ENCODE measurements at regions of chr22 and their contacts with region 1.

Region 1: DNA sequence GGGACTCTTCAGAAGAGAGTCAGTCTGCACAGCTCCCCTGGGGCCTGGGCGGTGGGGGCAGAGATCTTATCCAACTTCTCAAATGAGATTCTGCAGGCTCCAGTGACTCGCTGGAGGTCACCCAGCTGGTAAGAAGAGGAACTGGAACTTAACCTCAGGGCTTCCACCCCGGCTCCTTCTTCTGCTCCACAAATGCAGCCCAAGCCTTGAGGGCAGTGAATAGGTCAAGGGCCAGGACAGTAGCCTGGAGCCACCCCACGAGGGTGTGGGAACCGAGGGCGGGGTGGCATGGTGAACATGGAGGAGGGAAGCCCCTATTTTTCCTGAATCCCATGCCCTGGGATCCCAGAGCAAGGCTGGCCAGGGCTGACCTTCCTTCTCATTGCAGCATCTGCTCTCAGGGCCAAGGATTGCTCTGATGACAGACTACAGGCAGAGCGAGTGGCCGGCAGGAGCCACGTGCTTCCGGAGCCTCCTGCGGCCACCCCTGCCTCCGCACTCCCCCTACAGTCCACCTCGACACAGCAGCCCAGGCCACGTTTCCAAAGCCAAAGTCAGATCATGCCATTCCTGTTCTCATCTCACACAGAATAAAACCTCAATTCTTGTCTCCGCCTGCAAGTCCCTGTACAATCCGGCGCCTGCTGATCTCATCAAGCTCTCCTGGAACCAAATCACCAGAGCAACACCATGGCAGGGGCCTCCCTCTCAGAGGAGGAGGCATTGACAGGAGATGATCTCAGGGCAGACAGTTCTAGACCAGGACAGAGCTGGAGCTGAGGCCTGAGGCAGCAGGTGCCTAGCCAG is 21.1 kb upstream of the UPK3A start:
- DNase-seq: peak; percentile 71
- ATAC-seq: peak; percentile 92
- H3K4me3 ChIP-seq: peak overlapping the region; percentile 26; the same call in 1 of the 2 replicates
- H3K27ac ChIP-seq: peak overlapping the region; percentile 64
- H3K4me1 ChIP-seq: peaks cover 35% of the 10 kb centered on the region
- H3K27me3 ChIP-seq: no peaks in the 10 kb centered on the region; a peak in 1 of 4 replicates
- CTCF ChIP-seq: peak; percentile 69 to 92 (median 79)
- EP300 ChIP-seq: peak; percentile 52 to 61; a peak in 2 of 4 replicates
- POLR2A ChIP-seq: no peak
- RAD21 ChIP-seq: peak; percentile 74

Region 2: GRCh38 chr22:45125188-45125587 is 138.5 kb before region 1 on chr22:
- CTCF ChIA-PET with region 1: no interaction called
- POLR2A ChIA-PET with region 1: no interaction called
- RAD21 ChIA-PET with region 1: no interaction called
- SMC1A ChIA-PET with region 1: no interaction called
- in situ Hi-C with region 1: no loop called
- intact Hi-C with region 1: no loop called
- DNase-seq: no peak
- ATAC-seq: no peak
- H3K4me3 ChIP-seq: no peak overlapping the region
- H3K27ac ChIP-seq: no peak overlapping the region
- H3K4me1 ChIP-seq: peaks cover 4% of the 10 kb centered on the region
- H3K27me3 ChIP-seq: no peaks in the 10 kb centered on the region
- CTCF ChIP-seq: no peak
- EP300 ChIP-seq: no peak
- POLR2A ChIP-seq: no peak
- RAD21 ChIP-seq: no peak

Region 3: DNA sequence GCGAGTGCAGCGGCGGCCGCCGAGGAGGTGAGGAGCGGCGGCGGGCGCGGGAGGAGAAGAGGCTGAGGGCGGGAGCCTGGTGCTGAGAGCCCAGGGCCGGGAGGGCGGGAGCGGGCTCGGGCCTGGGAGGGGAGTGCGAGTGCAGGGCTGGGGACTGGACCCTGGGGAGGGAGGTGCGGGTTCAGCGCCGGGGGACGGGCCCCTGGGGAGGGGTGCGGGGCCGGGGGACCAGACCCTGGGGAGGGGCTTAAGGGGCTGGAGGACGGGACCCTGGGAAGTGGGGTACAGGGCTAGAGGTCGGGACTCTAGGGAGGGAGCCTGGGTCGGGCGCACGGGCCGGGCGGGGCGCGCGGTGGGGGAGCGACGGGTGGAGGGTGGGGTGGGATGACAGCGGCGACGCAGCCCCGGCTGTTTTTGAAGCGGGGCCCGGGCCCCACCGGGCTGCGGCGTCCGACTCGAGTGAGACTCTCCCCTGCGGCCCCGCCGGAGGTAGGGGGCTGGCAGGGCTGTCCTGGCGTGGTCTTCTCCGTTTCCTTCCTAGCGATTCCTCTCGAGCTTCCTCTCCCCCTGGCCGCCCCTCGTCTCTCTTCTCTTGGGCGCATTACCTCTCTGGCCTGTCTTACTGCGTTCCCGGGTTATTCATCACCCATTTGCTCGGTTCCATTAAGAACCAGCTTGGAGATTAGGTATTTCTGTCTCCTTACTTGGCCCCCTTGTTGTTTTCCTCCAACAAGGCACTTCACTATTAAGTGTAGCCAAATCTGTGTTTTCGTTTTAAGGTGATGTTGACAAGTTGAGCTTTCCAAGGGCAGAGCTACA is 99.2 kb before region 1 on chr22:
- CTCF ChIA-PET with region 1: interaction called, 6 read pairs
- POLR2A ChIA-PET with region 1: no interaction called
- RAD21 ChIA-PET with region 1: interaction called, 6 read pairs
- SMC1A ChIA-PET with region 1: interaction called, 24 read pairs
- in situ Hi-C with region 1: no loop called
- intact Hi-C with region 1: loop called (anchors 5 kb)
- DNase-seq: no peak
- ATAC-seq: peak; percentile 52
- H3K4me3 ChIP-seq: peak overlapping the region; percentile 97
- H3K27ac ChIP-seq: peak overlapping the region; percentile 78
- H3K4me1 ChIP-seq: peaks cover 9% of the 10 kb centered on the region
- H3K27me3 ChIP-seq: no peaks in the 10 kb centered on the region
- CTCF ChIP-seq: no peak
- EP300 ChIP-seq: no peak
- POLR2A ChIP-seq: no peak
- RAD21 ChIP-seq: no peak

Region 4: GRCh38 chr22:45235101-45235777 is 28.4 kb before region 1 on chr22:
- CTCF ChIA-PET with region 1: interaction called, 13 read pairs
- POLR2A ChIA-PET with region 1: interaction called, 6 read pairs
- RAD21 ChIA-PET with region 1: interaction called, 28 read pairs
- SMC1A ChIA-PET with region 1: interaction called, 32 read pairs
- in situ Hi-C with region 1: no loop called
- intact Hi-C with region 1: no loop called
- DNase-seq: peak; percentile 81
- ATAC-seq: peak; percentile 92
- H3K4me3 ChIP-seq: peak overlapping the region; percentile 67
- H3K27ac ChIP-seq: peak overlapping the region; percentile 93
- H3K4me1 ChIP-seq: peaks cover 62% of the 10 kb centered on the region
- H3K27me3 ChIP-seq: no peaks in the 10 kb centered on the region
- CTCF ChIP-seq: no peak
- EP300 ChIP-seq: peak; percentile 5 to 61; a peak in 2 of 4 replicates
- POLR2A ChIP-seq: peak; percentile 84
- RAD21 ChIP-seq: 0 out of 2 replicates have a peak, but pooled peaks have one; percentile 8

Region 5: GRCh38 chr22:45246060-45246985 is 17.3 kb before region 1 on chr22:
- CTCF ChIA-PET with region 1: interaction called, 10 read pairs
- POLR2A ChIA-PET with region 1: no interaction called
- RAD21 ChIA-PET with region 1: interaction called, 9 read pairs
- SMC1A ChIA-PET with region 1: interaction called, 7 read pairs
- in situ Hi-C with region 1: no loop called
- intact Hi-C with region 1: no loop called
- DNase-seq: no peak
- ATAC-seq: peak; percentile 27; the same call in 2 of the 3 replicates
- H3K4me3 ChIP-seq: no peak overlapping the region
- H3K27ac ChIP-seq: peak overlapping the region; percentile 75
- H3K4me1 ChIP-seq: peaks cover 42% of the 10 kb centered on the region
- H3K27me3 ChIP-seq: no peaks in the 10 kb centered on the region
- CTCF ChIP-seq: no peak
- EP300 ChIP-seq: no peak
- POLR2A ChIP-seq: no peak
- RAD21 ChIP-seq: no peak

Region 6: GRCh38 chr22:45353786-45354185 is 90.1 kb after region 1 on chr22:
- CTCF ChIA-PET with region 1: no interaction called
- POLR2A ChIA-PET with region 1: no interaction called
- RAD21 ChIA-PET with region 1: no interaction called
- SMC1A ChIA-PET with region 1: no interaction called
- in situ Hi-C with region 1: no loop called
- intact Hi-C with region 1: no loop called
- DNase-seq: no peak
- ATAC-seq: no peak
- H3K4me3 ChIP-seq: no peak overlapping the region
- H3K27ac ChIP-seq: no peak overlapping the region
- H3K4me1 ChIP-seq: no peaks in the 10 kb centered on the region
- H3K27me3 ChIP-seq: no peaks in the 10 kb centered on the region
- CTCF ChIP-seq: no peak
- EP300 ChIP-seq: no peak
- POLR2A ChIP-seq: no peak
- RAD21 ChIP-seq: no peak

Measured in GM12878 (cell line).